Naive thymus-derived CD8-positive, alpha-beta T cell (primary cell): ENCODE measurements at regions of chr20 and their contacts with region 1.

Region 1: DNA sequence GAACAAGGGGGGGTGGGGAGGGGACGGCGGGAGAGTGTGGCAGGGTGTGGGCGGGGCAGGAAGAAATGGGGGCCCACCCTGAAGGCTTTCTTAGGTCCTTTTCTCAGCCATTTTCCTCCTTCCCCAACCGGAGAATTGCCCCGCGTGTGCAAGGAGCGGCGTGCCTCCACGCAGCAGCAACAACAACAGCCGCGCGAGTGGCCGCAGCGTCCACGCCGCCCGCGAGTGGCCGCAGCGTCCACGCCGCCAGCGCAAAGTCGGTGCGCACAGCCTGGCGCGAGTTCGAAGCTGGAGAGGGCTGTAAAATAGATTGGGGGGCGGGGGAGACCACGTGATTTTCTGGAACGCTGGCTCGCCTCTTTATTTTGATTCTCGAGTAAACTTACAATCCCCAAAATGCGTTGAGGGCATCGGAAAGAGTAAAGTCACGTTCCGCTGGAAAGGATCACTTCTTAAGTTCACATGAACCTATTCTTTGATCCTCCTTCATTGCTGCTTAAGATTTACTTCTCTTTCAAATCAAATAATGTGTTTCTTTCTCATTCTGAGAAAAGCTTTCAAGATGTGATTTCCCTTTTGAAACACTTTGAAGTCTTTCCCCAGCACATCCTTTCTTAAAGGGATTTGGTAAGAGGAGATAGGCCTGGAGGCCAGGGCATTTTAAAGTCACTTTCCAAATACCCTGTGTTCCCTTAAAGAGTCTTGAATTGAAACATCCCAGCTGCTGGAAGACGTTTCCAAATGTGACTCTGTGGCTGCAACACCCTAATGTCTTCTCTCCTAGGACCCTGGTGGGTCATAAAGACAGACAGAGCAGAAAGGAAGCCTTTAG is 66.7 kb upstream of the ZNF217 start:
- DNase-seq: peak in 8 of 10 donors; percentile 13 to 52 (median 32)
- ATAC-seq: peak; percentile 42 to 48
- H3K4me3 Mint-ChIP-seq: peak overlapping the region; percentile 81 to 93 (median 86)
- H3K27ac Mint-ChIP-seq: peak overlapping the region; percentile 82 to 96 (median 92)
- H3K4me1 Mint-ChIP-seq: peaks cover 18 to 70% (median 66%) of the 10 kb centered on the region in 4 donors
- H3K27me3 Mint-ChIP-seq: no peaks in the 10 kb centered on the region

Region 2: GRCh38 chr20:53578492-53579222 is 81.6 kb before region 1 on chr20:
- POLR2A ChIA-PET with region 1: interaction called, 13 read pairs
- DNase-seq: peak in 9 of 10 donors; percentile 51 to 89 (median 74)
- ATAC-seq: peak; percentile 33 to 49
- H3K4me3 Mint-ChIP-seq: peak overlapping the region; percentile 79 to 94 (median 92)
- H3K27ac Mint-ChIP-seq: peak overlapping the region; percentile 91 to 99 (median 96)
- H3K4me1 Mint-ChIP-seq: peaks cover 31 to 94% (median 82%) of the 10 kb centered on the region in 4 donors
- H3K27me3 Mint-ChIP-seq: no peaks in the 10 kb centered on the region

Region 3: GRCh38 chr20:53738039-53738944 is 78.0 kb after region 1 on chr20:
- POLR2A ChIA-PET with region 1: no interaction called
- DNase-seq: no peak
- ATAC-seq: no peak
- H3K4me3 Mint-ChIP-seq: no peak overlapping the region
- H3K27ac Mint-ChIP-seq: peak overlapping the region in 5 of 10 donors; percentile 28 to 93 (median 89)
- H3K4me1 Mint-ChIP-seq: peaks cover 25 to 59% (median 49%) of the 10 kb centered on the region in 4 donors
- H3K27me3 Mint-ChIP-seq: no peaks in the 10 kb centered on the region